ENCODE measurements at regions of chr4 and their contacts with region 1.

Region 1: GRCh38 chr4:26907731-26908599 is 47.3 kb downstream of the STIM2 start:
- DNase-seq: peak; percentile 23
- H3K4me3 Mint-ChIP-seq: peak overlapping the region; percentile 8
- H3K27ac Mint-ChIP-seq: peak overlapping the region; percentile 74
- H3K4me1 Mint-ChIP-seq: peaks cover 73% of the 10 kb centered on the region
- H3K27me3 Mint-ChIP-seq: no peaks in the 10 kb centered on the region

Region 2: DNA sequence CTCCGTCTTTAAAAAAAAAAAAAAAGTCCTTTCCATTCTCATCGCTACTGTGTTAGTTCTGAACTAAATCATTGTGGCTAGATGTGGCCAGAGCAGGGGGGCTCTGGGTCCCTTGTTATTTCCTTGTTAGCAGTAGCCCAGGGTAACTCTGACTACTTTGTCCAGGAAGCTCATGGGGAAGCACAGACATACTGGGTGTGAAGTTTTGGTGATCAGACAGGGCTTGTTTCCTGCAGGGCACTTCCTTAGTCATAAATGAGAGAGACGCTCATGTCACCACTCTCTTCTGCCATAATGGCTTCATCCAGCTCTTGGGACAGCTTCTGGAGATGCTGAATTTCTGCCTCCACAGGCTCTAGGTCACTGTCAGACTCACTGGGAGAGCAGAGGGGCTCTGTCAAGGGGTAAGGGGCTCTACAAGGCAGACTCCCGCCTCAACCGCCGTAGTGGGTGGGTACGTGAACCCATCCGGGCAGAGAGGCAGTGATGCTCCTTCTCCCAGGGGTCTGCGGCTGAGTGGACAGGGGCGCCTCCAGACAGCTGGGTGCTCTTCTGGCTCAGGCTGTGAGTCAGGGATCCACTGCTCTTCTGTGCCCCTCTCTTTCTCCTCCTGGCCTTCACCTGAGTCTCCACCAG is 34.5 kb before region 1 on chr4:
- CTCF ChIA-PET with region 1: no interaction called
- intact Hi-C with region 1: loop called (anchors 1 kb)
- DNase-seq: peak; percentile 89
- H3K4me3 Mint-ChIP-seq: no peak overlapping the region
- H3K27ac Mint-ChIP-seq: peak overlapping the region; percentile 69
- H3K4me1 Mint-ChIP-seq: peaks cover 80% of the 10 kb centered on the region
- H3K27me3 Mint-ChIP-seq: no peaks in the 10 kb centered on the region

Region 3: DNA sequence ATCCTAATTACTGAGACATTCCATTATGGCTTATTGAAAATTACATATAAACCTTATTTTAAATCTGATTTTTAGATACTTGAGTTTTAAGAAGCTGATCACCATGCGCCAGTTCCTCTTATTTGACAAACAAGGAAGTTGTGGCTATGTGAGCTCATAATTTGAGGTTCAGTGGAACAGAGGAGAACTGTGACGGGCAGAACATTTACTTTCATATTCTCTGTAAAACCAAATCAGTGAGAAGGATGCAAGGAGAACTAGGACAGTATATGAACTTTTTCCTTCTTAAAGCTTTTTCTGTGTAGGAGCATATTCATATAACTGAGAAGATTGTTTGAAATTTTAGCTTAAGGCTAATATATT is 22.1 kb before region 1 on chr4:
- CTCF ChIA-PET with region 1: no interaction called
- intact Hi-C with region 1: loop called (anchors 1 kb)
- DNase-seq: peak; percentile 42
- H3K4me3 Mint-ChIP-seq: peak overlapping the region; percentile 58
- H3K27ac Mint-ChIP-seq: peak overlapping the region; percentile 88
- H3K4me1 Mint-ChIP-seq: peaks cover 67% of the 10 kb centered on the region
- H3K27me3 Mint-ChIP-seq: no peaks in the 10 kb centered on the region

Region 4: DNA sequence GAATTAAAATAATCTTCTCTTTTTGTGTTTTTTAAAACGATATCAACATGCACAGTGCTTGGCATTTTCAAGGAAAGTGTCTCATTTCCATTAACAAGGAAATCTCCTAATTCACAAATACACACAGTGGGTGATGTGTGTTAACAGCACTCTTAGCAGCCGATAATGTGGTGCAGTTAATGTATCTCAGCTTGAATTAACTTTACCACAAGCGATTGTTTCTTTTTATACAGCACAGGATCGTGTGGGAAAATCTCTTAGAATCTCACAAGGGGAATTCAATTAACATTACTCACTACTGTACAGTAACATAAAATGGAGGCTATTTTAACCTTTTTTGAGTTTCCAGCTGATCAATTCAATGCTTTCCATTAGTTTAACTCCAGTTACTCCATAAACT is 1794.6 kb after region 1 on chr4:
- CTCF ChIA-PET with region 1: no interaction called
- intact Hi-C with region 1: no loop called
- DNase-seq: no peak
- H3K4me3 Mint-ChIP-seq: no peak overlapping the region
- H3K27ac Mint-ChIP-seq: no peak overlapping the region
- H3K4me1 Mint-ChIP-seq: no peaks in the 10 kb centered on the region
- H3K27me3 Mint-ChIP-seq: no peaks in the 10 kb centered on the region

Measured in activated naive CD4-positive, alpha-beta T cell treated with anti-CD3 and anti-CD28 coated beads for 36 hours (primary cell).